B cell (primary cell): ENCODE measurements at regions of chr13 and their contacts with region 1.

Region 1: DNA sequence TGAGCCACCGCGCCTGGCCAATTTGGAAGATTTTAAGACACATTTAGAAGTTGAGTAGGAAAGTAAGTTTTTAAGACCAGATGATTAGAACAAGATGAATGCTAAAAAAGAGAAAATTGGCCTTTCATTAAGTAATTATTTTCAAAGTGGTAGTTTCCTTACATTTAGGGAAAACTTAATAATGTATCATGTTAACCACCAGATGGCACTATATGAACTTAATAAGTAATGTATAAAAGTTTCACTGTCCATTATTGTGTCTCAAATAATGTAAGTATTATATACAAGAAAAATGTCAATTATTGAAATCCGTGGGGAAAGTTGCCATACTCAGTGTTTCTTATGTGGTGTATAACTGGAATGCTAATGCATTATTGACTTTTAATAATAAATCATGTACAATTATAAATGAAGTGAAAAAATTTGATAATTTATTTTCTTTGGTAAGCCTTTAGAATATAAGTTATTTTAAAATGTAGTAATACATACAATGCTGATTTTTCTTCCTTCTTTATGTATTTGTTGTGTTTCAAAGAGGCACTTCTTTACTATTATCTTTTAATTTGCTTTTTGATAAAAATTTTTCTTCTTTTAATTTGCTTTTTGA is 29.2 kb downstream of the COG6 start:
- DNase-seq: peak; percentile 47
- ATAC-seq: no peak
- H3K4me3 ChIP-seq: no peak overlapping the region
- H3K4me3 Mint-ChIP-seq: no peak overlapping the region
- H3K27ac ChIP-seq: no peak overlapping the region
- H3K27ac Mint-ChIP-seq: no peak overlapping the region
- H3K4me1 ChIP-seq: peaks cover 0 to 7% of the 10 kb centered on the region in 2 donors
- H3K4me1 Mint-ChIP-seq: peaks cover 13% of the 10 kb centered on the region
- H3K27me3 ChIP-seq: no peaks in the 10 kb centered on the region
- H3K27me3 Mint-ChIP-seq: no peaks in the 10 kb centered on the region
- CTCF ChIP-seq: peak; percentile 77

Region 2: GRCh38 chr13:39942552-39943273 is 258.1 kb after region 1 on chr13:
- CTCF ChIA-PET with region 1: interaction called, 9 read pairs
- POLR2A ChIA-PET with region 1: no interaction called
- intact Hi-C with region 1: loop called (anchors 10 kb)
- DNase-seq: peak; percentile 75
- ATAC-seq: peak; percentile 99
- H3K4me3 ChIP-seq: no peak overlapping the region
- H3K4me3 Mint-ChIP-seq: no peak overlapping the region
- H3K27ac ChIP-seq: no peak overlapping the region
- H3K27ac Mint-ChIP-seq: no peak overlapping the region
- H3K4me1 ChIP-seq: peaks cover 0 to 2% of the 10 kb centered on the region in 2 donors
- H3K4me1 Mint-ChIP-seq: peaks cover 1% of the 10 kb centered on the region
- H3K27me3 ChIP-seq: peaks cover 0 to 4% (median 0%) of the 10 kb centered on the region in 4 experiments
- H3K27me3 Mint-ChIP-seq: peaks cover 4% of the 10 kb centered on the region
- CTCF ChIP-seq: peak; percentile 98

Region 3: DNA sequence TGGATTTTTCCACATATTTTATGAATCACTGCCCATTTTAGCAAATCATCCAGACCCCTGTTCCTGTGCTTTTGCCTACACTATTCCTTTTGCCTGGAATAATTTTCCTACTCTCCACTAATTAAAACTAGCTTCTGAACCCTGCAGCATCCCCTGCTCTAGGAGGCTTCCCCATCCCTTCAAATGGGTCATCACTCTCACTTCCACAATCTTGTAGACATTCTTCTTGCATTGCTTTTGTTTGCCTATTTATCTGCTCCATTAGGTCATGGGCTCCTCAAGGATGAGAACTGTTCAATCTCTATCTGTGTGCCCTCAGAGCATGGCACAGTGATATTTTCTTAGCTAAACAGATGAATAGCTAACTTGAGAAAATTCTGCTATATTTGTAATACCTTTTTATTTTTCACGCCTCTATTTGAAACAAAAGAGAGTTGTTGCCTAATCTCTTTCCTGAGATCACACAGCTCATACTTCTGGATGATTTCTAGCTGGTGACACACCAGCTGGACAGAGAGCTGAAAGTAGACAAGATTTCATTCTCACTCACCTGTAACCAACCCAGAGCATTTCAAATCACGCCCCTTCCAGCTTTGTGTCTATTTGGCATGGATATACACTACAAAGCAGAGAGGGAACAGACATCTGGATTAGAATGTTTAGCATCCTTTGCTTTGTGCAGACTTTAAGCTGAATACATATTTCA is 515.8 kb after region 1 on chr13:
- CTCF ChIA-PET with region 1: no interaction called
- POLR2A ChIA-PET with region 1: no interaction called
- intact Hi-C with region 1: loop called (anchors 5 kb)
- DNase-seq: no peak
- ATAC-seq: no peak
- H3K4me3 ChIP-seq: no peak overlapping the region
- H3K4me3 Mint-ChIP-seq: no peak overlapping the region
- H3K27ac ChIP-seq: no peak overlapping the region
- H3K27ac Mint-ChIP-seq: peak overlapping the region; percentile 18
- H3K4me1 ChIP-seq: peaks cover 25 to 27% of the 10 kb centered on the region in 2 donors
- H3K4me1 Mint-ChIP-seq: peaks cover 39% of the 10 kb centered on the region
- H3K27me3 ChIP-seq: no peaks in the 10 kb centered on the region
- H3K27me3 Mint-ChIP-seq: no peaks in the 10 kb centered on the region
- CTCF ChIP-seq: no peak

Region 4: DNA sequence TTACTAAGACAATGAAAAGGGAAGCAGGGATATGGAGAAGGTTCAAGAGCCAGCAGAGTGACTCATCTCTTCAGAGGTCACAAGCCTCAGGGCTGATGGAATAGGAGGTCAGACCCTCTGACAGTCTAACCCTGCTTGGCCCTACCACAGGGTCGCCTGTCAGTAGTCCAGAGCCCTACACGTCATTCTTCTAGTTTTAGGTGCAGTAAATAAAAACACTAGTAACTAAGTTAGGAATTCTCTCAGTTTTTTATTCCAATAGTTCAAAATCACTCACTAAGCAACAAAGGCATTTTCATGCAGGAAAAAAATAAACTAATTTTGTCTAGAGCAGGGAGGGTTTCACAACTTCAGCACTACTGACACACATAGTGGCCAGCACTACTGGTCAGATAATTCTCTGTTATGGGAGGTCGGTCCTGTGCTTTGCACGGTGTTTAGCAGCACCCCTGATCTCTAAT is 954.6 kb after region 1 on chr13:
- CTCF ChIA-PET with region 1: no interaction called
- POLR2A ChIA-PET with region 1: no interaction called
- intact Hi-C with region 1: no loop called
- DNase-seq: no peak
- ATAC-seq: no peak
- H3K4me3 ChIP-seq: no peak overlapping the region
- H3K4me3 Mint-ChIP-seq: peak overlapping the region; percentile 49
- H3K27ac ChIP-seq: peak overlapping the region in 1 of 2 donors; percentile 78
- H3K27ac Mint-ChIP-seq: peak overlapping the region; percentile 50
- H3K4me1 ChIP-seq: peaks cover 84 to 88% of the 10 kb centered on the region in 2 donors
- H3K4me1 Mint-ChIP-seq: peaks cover 81% of the 10 kb centered on the region
- H3K27me3 ChIP-seq: no peaks in the 10 kb centered on the region
- H3K27me3 Mint-ChIP-seq: no peaks in the 10 kb centered on the region
- CTCF ChIP-seq: no peak